ENCODE measurements at regions of chr17 and their contacts with region 1.

Region 1: DNA sequence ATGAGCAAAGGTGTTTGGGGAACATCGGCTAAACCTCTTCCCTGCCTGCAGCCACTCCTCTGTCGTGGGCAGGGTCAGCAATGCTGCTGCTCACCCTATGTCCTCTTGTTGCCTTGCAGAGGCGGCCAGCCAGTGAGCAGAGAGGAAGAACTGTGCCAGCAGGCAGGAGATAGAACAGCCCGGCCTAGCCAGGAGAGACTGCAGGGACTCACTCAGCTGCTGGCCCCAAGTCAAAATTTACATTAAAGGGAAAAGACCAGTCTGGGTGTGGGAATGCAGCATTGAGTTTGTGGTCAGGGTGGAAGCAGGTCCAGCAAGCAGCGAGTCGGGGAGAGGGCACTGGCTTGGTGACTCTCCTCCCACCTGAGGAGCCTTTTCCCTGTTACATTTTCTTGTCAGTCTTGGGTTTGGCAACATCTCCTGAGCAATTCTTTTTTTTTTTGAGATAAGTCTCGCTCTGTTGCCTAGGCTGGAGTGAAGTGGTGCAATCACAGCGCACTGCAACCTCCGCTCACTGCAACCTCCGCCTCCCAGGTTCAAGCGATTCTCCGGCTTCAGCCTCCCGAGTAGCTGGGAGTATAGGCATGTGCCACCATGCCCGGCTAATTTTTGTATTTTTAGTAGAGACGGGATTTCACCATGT is 22.7 kb downstream of the LIG3 start:
- DNase-seq: peak in 1 of 2 donors; percentile 62
- ATAC-seq: no peak

Region 2: DNA sequence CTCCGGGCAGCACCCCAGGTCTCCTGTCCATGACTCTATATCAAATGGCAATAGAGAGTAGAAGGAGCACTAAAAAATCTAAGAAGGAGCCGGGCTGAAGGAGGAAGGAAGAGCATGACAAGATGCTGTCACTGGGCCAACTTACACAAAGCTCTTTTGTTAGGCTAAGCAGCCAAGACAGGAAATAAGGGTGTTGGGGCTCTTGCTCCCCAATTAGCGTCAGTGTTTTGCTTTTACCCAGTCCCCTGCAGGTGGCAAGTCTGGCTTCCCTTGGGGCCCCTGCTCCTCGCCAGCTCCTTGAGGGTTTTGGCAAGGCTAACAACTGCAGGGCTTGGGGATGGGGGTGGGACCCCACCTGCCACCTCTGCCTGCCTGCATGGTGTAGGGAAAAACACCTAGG is 162.2 kb before region 1 on chr17:
- intact Hi-C with region 1: no loop called
- DNase-seq: no peak
- ATAC-seq: no peak

Region 3: DNA sequence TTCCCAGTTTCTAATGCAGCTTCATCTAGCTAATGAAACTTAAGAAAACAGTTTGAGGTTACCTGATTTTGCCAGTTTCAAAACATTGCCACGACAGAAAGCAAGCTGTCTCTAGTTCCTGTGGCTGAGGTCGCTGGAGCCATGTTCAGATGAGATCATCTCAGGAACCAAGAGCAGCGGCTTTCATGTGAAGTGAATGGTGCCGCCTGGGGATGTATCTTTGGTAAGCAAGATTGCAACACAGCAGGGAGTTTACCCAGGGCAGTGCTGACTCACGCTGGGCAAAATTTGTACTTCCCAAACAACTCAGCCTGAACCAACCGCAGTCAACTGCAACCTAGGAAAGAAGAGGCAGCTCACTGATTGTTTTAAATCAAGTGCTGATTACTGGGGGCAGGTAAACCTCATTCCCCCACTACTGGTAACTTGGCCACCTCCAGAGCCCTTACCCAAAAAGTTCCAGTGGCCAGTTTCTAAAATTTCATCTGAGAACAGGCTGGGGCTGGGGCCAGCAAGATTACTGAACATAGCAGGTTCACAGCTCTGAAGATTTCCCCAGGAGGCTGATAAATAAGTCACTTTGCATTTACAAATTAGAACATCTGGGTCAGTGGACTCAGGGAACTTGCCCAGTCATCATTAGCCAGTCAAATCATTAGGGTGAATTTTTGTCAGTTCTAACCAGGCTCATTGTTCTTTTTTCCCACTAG is 60.7 kb after region 1 on chr17 and contains the start of gene RFFL:
- intact Hi-C with region 1: no loop called
- DNase-seq: peak; percentile 83 to 93
- ATAC-seq: peak; percentile 99
- total RNA-seq, gene RFFL: 53.4 to 60.8 TPM

Region 4: DNA sequence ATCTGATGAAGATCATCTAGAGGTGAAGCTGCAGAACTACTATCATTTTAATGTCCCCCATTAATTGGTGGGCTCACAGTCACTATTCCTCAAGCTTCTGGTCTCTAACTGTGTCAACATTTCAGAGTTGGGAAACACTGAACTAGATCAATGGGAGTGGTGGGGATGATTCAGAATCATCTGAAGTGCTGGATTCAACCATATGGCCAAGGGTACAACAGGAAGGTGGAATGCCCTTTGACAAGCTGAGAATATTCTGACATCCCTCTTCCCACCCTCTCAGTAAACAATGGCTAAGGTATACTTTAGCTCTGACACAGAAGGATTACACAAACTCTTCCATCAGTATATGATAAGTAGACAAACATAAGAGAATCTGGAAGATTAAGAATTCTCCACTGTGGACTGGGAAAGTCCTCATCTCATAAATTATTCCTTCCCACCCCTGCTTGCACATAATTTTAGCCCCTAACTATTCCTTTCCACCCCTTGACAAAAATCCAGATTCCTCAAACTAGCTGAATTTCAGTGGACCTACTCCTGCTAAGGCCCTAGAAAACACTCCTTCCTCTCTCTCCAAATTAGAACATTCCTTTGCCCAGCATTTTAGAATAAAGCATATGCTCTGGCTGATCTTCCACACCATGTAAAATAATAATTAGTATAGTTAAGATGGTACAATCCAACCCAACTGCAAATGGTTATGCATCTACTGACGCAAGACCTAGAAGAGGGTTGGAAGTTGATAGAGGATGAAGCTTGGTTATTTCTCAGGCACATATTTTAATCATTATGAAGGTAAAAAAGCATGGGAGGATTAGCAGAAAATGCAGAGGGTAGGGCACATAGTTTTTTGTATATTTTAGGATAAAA is 76.8 kb after region 1 on chr17:
- intact Hi-C with region 1: loop called in 1 of 2 experiments (anchors 10 kb)
- DNase-seq: no peak
- ATAC-seq: peak; percentile 90

Measured in left colon (tissue), 2 donors.